Transverse colon (tissue), 4 donors: ENCODE measurements at regions of chr20 and their contacts with region 1.

Region 1: GRCh38 chr20:3312940-3313682 is 74.1 kb upstream of the SLC4A11 start:
- DNase-seq: no peak
- H3K4me3 ChIP-seq: no peak overlapping the region
- H3K27ac ChIP-seq: no peak overlapping the region
- H3K4me1 ChIP-seq: no peaks in the 10 kb centered on the region
- H3K27me3 ChIP-seq: no peaks in the 10 kb centered on the region
- CTCF ChIP-seq: no peak
- EP300 ChIP-seq: no peak
- POLR2A ChIP-seq: no peak

Region 2: GRCh38 chr20:3068986-3069900 is 243.9 kb before region 1 on chr20:
- in situ Hi-C with region 1: loop called in 2 of 4 experiments (anchors 25 kb)
- intact Hi-C with region 1: no loop called
- DNase-seq: no peak
- H3K4me3 ChIP-seq: no peak overlapping the region
- H3K27ac ChIP-seq: no peak overlapping the region
- H3K4me1 ChIP-seq: peaks cover 0 to 12% (median 9%) of the 10 kb centered on the region in 4 donors
- H3K27me3 ChIP-seq: peaks cover 31% of the 10 kb centered on the region
- CTCF ChIP-seq: peak in 3 of 5 experiments; percentile 6 to 14 (median 7)
- EP300 ChIP-seq: no peak
- POLR2A ChIP-seq: no peak